Dendritic cell treated with granulocyte-macrophage colony-stimulating factor and Interleukin-4, amounts not matched to agents 40 ng/mL and 50 ng/mL, for 4 days (primary cell): ENCODE measurements at regions of chr3 and their contacts with region 1.

Region 1: GRCh38 chr3:69671082-69671952 is 67.9 kb upstream of the MITF start:
- H3K4me3 Mint-ChIP-seq: no peak overlapping the region
- H3K27ac Mint-ChIP-seq: no peak overlapping the region
- H3K4me1 Mint-ChIP-seq: no peaks in the 10 kb centered on the region
- H3K27me3 Mint-ChIP-seq: no peaks in the 10 kb centered on the region

Region 2: DNA sequence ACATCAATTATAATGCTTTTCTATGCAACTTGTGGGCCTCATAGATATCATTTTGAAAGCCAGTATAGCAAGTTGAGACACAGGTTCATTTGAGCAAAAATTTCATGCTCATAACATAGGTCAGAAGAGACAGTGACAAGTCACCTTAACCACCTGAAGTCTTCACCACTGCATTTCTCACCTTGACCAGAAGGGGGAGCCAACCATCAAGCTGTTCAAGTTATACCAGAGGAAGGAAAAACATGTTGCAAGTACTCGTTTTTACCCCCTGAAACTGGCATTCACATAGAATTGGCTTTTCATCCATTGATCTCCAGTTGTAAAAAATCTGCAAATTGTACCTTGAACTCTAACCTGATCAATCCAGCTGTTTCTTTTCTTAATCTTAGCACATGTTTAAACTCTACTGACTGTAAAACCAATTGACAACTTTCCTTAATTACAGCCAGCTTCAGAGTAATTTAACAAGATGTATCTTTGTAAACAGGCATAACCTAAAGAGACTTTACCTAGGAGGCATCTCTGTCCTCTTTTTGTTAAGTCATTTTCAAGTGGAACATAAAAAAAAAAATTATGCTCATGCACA is 550.3 kb before region 1 on chr3:
- intact Hi-C with region 1: loop called (anchors 2 kb)
- H3K4me3 Mint-ChIP-seq: no peak overlapping the region
- H3K27ac Mint-ChIP-seq: no peak overlapping the region
- H3K4me1 Mint-ChIP-seq: no peaks in the 10 kb centered on the region
- H3K27me3 Mint-ChIP-seq: no peaks in the 10 kb centered on the region

Region 3: DNA sequence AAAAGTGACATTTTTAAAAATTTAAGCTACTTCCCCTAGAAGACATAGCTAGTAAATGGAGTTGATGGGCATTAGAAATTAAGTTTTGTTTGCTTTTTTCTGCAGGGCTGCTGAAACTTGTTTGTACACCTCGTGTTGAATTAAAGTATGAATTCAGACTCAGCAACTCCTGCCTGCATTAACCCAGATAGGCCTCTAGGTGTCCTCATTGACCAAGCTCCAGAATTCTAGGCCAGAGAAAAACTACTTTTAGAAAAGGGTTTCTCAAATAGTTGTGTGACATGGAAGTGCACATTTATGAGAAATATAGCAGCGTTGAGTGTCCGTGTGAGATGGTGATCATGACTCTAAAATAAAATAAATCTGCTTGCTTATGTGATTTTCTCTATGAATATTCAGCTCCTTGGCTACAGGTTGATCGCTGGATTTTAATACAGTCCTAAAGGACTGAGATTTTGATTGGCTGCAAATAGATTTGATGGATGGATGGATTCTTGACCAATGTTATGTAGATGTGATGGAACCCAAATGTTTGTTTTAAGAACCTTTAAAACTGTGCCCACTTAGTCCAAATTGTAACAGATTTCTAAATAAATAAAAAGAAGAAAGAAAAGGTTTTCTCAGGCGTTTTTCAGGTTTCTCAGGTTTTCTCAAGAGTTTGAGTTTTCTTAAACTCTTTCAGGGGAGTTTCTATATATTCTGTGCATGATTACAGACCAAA is 509.6 kb before region 1 on chr3:
- intact Hi-C with region 1: loop called (anchors 1 kb)
- H3K4me3 Mint-ChIP-seq: no peak overlapping the region
- H3K27ac Mint-ChIP-seq: no peak overlapping the region
- H3K4me1 Mint-ChIP-seq: no peaks in the 10 kb centered on the region
- H3K27me3 Mint-ChIP-seq: no peaks in the 10 kb centered on the region

Region 4: DNA sequence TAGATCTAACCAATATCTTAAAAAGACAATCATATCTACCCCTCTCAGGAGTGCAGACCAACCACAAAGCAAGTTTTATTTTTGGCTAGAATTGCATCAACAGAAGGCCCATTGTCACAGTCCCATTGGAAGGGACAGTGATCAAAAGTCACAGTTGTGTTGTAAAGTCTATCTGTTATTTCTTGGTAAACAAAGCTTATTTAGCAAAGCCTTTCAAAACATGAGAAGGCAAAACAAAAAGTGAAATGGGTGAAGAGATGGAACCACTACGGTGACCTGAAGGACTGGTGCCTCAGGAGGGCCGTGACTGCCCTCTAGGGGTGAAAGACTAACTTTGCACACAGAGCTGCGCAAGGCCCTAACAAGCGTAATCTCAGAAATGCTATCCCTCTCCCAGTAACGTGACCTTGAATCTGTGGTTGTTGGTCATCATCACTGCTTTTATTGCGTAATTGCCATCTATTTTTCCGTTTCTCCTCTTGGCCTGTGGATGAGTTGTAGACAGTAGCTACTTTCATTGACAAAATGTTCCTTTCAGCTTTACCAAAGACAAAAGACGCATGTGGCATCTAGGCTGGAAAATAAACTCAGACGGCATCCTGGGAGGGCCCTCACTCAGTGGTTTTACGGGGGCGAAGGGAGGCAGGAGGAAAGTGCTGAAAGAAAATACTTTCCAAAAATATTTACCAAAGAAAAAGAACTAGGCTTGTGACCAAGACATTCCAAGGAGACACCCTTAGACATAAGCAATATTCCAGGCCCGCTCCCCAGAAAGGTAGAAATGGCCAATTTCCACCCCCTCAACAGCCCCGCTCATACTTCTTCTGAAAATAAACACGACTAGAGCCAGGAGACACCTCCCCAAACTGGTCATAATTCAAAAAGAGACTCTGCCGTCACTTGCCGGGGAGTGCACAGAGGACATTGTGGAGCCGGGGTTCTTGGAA is 364.8 kb before region 1 on chr3:
- intact Hi-C with region 1: loop called (anchors 5 kb)
- H3K4me3 Mint-ChIP-seq: no peak overlapping the region
- H3K27ac Mint-ChIP-seq: peak overlapping the region; percentile 51
- H3K4me1 Mint-ChIP-seq: peaks cover 16% of the 10 kb centered on the region
- H3K27me3 Mint-ChIP-seq: no peaks in the 10 kb centered on the region

Region 5: GRCh38 chr3:69439643-69440270 is 231.6 kb before region 1 on chr3:
- intact Hi-C with region 1: loop called (anchors 5 kb)
- H3K4me3 Mint-ChIP-seq: peak overlapping the region; percentile 23
- H3K27ac Mint-ChIP-seq: peak overlapping the region; percentile 67
- H3K4me1 Mint-ChIP-seq: peaks cover 44% of the 10 kb centered on the region
- H3K27me3 Mint-ChIP-seq: no peaks in the 10 kb centered on the region

Region 6: DNA sequence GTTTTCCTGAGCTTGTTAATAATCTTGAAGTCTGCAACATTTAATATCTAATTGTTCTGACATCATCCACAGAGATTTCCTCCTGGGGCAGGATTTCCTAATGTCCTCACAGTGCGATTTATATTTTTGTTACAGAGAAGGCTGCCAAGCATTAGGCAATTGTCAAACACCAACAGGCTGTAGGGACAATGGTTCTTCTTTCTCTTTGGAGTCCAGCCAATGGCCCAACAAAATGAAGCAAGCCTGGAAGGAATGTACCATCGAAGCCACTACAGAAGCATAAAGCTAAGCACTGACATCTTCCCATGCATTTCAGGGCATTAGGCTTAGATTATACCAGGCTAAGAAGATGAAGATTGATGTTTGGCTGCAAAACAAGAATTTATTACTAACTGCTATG is 112.4 kb before region 1 on chr3:
- intact Hi-C with region 1: no loop called
- H3K4me3 Mint-ChIP-seq: no peak overlapping the region
- H3K27ac Mint-ChIP-seq: no peak overlapping the region
- H3K4me1 Mint-ChIP-seq: peaks cover 24% of the 10 kb centered on the region
- H3K27me3 Mint-ChIP-seq: no peaks in the 10 kb centered on the region